Motor neuron (in vitro differentiated cells): ENCODE measurements at regions of chr2 and their contacts with region 1.

Region 1: DNA sequence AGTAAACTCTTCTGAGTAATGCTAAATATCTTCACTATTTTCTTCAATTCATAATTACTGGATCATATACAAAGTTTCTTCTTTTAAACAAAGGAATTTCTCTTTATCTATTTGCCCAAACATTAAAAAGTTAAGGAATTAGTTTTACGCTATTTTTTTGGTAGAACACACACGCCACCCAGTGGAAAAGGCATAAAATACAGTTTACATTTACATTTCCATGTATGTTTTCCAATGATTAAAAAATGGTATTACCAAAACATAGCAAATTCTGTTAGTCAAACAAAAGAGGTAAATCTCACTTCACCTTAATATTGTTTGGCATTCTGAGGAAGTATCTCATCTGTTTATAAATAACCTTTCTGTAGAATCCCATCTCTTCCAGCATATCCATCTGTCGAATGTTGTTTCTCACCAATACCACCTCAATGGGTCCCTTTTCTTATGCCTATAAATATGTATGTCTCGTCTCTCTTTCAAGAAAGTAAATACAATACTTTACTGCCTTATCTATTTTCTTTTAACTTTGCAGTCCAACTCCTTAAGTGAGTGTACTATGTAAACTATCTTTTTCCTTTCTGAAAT is 7.2 kb downstream of the BOLL start:
- ATAC-seq: no peak
- H3K4me3 ChIP-seq: no peak overlapping the region
- H3K27ac ChIP-seq: no peak overlapping the region
- H3K4me1 ChIP-seq: no peaks in the 10 kb centered on the region

Region 2: DNA sequence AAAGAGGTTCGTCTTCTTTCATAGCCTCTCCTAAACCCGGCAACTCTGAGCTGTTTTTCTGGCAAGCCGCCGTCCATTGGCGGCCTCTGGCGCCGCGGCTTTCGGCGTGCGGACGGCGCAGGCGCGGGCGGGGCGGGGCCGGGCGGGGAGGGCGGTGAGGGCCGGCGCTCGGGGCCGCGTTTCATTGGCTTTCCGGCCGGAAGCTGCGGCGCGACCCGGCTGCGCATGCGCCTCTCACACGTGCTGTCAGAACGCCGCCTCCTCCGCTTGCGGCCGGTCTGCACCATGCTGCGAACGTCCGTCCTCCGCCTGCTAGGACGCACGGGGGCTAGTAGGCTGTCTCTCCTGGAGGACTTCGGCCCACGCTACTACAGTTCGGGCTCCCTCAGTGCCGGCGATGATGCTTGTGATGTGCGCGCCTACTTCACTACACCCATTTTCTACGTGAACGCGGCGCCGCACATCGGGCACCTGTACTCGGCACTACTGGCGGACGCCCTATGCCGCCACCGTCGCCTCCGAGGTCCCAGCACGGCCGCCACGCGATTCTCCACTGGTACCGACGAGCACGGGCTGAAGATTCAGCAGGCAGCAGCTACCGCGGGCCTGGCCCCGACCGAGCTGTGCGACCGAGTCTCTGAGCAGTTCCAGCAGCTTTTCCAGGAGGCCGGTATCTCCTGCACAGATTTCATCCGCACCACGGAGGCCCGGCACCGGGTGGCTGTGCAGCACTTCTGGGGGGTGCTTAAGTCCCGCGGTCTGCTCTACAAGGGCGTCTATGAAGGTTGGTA is 72.6 kb before region 1 on chr2 and contains the start of gene MARS2:
- in situ Hi-C with region 1: loop called in 1 of 9 experiments (anchors 10 kb)
- ATAC-seq: peak; percentile 83 to 95 (median 92)
- H3K4me3 ChIP-seq: peak within 1 kb of the TSS; percentile 64 to 89 (median 78)
- H3K27ac ChIP-seq: peak within 1 kb of the TSS; percentile 62 to 85
- H3K4me1 ChIP-seq: peaks cover 20% of the 10 kb centered on the region in 2 donors
- total RNA-seq, gene MARS2: 5.4 to 21.0 (median 8.4) TPM

Region 3: GRCh38 chr2:197969391-197969893 is 191.5 kb after region 1 on chr2:
- in situ Hi-C with region 1: no loop called
- ATAC-seq: no peak
- H3K4me3 ChIP-seq: no peak overlapping the region
- H3K27ac ChIP-seq: no peak overlapping the region
- H3K4me1 ChIP-seq: no peaks in the 10 kb centered on the region

Region 4: GRCh38 chr2:198073253-198073652 is 295.3 kb after region 1 on chr2:
- in situ Hi-C with region 1: no loop called
- ATAC-seq: no peak
- H3K4me3 ChIP-seq: no peak overlapping the region
- H3K27ac ChIP-seq: no peak overlapping the region
- H3K4me1 ChIP-seq: peaks cover 2 to 17% of the 10 kb centered on the region in 2 donors